ENCODE measurements at regions of chr9 and their contacts with region 1.

Region 1: GRCh38 chr9:128117613-128118471 is 9.7 kb downstream of the PTGES2 start:
- DNase-seq: peak; percentile 35
- H3K4me3 ChIP-seq: no peak overlapping the region
- H3K27me3 ChIP-seq: no peaks in the 10 kb centered on the region
- CTCF ChIP-seq: peak; percentile 100

Region 2: DNA sequence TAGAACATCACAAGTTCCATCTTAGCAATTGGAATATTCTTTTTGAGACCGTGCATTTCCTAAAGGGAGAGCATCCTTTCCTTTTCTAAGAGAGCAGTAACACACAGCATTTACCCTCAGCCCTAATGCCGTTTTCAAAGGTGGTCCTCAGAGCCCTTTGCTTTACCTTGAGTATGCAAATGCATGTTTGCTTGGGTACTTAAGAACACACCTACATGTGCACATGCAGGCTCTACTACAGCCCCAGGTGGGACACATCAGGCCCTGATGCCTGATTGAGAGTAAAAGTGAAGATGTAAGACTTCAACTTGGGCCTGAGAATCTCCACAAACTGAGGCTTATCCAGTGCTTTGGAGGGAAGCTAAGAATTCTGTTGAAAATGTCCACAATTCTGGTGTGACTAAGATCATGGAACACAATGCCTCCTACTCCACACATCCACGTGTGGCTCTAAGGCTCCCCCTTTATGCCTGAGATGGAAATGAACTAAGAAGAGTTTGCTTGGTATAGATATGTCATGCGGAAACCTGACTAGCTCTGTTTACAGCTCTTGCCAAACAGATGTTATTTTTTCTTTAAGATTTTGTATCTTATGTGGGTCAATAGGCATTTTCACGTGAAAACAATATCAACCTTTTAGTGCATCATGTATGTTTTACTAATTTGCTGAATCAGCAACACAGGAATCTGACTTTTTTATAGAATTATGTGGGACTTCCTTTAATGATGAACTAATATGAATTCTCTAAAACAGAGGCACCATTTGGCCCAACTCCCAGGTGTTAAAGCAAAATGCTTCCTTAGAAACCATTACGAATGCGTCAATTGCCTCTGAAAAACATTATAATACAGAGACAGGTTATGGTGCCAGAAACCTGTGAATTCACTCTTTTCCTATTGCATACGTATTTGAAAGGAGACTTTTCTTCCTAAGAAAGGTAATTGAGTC is 769.7 kb before region 1 on chr9:
- CTCF ChIA-PET with region 1: no interaction called
- POLR2A ChIA-PET with region 1: no interaction called
- DNase-seq: no peak
- H3K4me3 ChIP-seq: no peak overlapping the region
- H3K27me3 ChIP-seq: no peaks in the 10 kb centered on the region
- CTCF ChIP-seq: peak; percentile 75

Region 3: DNA sequence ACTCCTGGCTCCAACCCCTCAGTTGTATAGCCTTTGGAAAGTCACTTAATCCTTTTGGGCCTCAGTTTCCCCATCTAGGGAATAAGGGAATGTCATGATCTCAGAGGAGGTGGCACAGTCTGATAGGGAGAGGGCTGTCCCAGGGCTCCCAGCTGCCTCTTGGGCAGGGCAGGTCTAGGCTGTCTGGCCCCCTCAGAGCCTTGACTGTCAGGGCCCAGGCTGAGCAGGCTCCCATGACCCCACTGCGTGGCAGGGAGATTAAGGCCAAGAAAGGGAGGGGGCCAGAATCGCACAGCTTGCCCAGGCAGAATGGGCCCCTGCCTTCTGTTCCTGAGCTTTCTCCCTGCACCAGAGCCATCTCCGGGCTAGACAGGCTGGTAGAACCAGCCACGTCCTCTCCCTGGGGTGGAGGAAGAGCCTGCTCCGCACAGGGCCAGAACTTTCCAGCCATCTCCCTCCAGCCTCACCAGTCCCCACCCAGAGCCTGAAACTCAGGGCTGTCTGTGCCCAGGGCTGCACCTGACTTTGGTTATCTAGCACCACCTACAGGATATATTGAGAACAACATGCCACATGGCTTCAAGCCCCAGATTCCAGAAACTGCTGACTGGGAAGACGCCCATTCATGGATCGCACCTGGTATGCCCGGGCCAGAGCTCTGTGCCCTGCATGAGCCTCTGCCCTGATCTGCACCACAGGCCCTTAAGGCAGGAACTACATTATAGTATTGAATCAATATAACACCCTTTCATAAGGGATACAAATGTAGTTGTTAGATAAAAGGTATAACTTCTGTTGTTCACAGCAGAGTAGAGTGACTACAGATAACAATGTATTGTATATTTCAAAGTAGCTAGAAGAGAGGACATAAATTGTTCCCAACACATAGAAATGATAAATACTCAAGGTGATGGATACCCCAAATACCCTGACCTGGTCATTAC is 82.7 kb before region 1 on chr9:
- CTCF ChIA-PET with region 1: interaction called, 13 read pairs
- POLR2A ChIA-PET with region 1: no interaction called
- DNase-seq: no peak
- H3K4me3 ChIP-seq: no peak overlapping the region
- H3K27me3 ChIP-seq: no peaks in the 10 kb centered on the region
- CTCF ChIP-seq: peak; percentile 72

Region 4: DNA sequence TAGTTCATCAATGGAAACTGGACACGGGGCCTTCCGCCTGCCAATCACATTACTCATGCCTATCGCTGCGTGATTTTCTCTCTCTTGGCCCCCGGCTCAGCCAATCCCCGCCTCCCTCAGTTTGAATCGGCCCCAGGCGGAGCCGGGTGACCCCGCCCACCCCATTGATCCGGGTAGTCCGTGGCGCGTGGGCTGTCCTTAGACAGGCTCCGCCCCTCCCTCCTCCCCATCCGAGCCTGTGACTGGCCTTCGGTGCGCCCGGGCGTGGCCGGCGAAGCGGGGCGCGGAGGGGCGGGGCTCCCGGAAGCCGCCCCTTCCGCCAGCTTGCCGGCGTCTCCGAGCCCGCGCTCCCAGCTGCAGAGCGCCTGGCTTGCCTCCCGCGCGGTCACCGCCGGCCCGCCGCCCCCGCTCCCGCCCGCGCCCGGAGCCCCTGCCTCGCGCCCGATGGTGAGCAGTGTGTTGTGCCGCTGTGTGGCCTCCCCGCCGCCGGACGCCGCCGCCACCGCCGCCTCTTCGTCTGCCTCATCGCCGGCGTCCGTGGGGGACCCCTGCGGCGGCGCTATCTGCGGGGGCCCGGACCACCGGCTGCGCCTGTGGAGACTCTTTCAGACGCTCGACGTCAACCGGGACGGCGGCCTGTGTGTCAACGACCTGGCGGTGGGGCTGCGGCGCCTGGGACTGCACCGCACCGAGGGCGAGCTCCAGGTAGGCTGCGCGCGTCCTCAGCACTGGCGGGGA is 49.8 kb before region 1 on chr9 and contains the start of gene SLC25A25:
- CTCF ChIA-PET with region 1: interaction called, 11 read pairs
- POLR2A ChIA-PET with region 1: no interaction called
- DNase-seq: peak; percentile 95
- H3K4me3 ChIP-seq: peak within 1 kb of the TSS; percentile 76
- H3K27me3 ChIP-seq: no peaks in the 10 kb centered on the region
- CTCF ChIP-seq: no peak
- polyA plus RNA-seq, gene SLC25A25: 10.2 and 12.9 TPM in 2 replicates

Region 5: GRCh38 chr9:128094166-128094967 is 23.5 kb before region 1 on chr9:
- CTCF ChIA-PET with region 1: interaction called, 40 read pairs
- POLR2A ChIA-PET with region 1: no interaction called
- DNase-seq: peak; percentile 91
- H3K4me3 ChIP-seq: peak overlapping the region; percentile 10
- H3K27me3 ChIP-seq: no peaks in the 10 kb centered on the region
- CTCF ChIP-seq: no peak

Region 6: GRCh38 chr9:128103589-128103962 is 14.3 kb before region 1 on chr9:
- CTCF ChIA-PET with region 1: interaction called, 59 read pairs
- POLR2A ChIA-PET with region 1: no interaction called
- DNase-seq: no peak
- H3K4me3 ChIP-seq: no peak overlapping the region
- H3K27me3 ChIP-seq: no peaks in the 10 kb centered on the region
- CTCF ChIP-seq: no peak

Region 7: GRCh38 chr9:128127990-128128835 is 10.4 kb after region 1 on chr9:
- CTCF ChIA-PET with region 1: interaction called, 56 read pairs
- POLR2A ChIA-PET with region 1: no interaction called
- DNase-seq: peak; percentile 38
- H3K4me3 ChIP-seq: peak overlapping the region; percentile 90
- H3K27me3 ChIP-seq: peaks cover 8% of the 10 kb centered on the region
- CTCF ChIP-seq: no peak

Region 8: GRCh38 chr9:128142061-128142460 is 24.2 kb after region 1 on chr9:
- CTCF ChIA-PET with region 1: interaction called, 10 read pairs
- POLR2A ChIA-PET with region 1: no interaction called
- DNase-seq: no peak
- H3K4me3 ChIP-seq: no peak overlapping the region
- H3K27me3 ChIP-seq: no peaks in the 10 kb centered on the region; the same call in 1 of the 2 replicates
- CTCF ChIP-seq: no peak

Measured in BJ (cell line).